ENCODE measurements at regions of chr6 and their contacts with region 1.

Region 1: GRCh38 chr6:166956444-166957086 is at the start of gene RNASET2:
- DNase-seq: peak; percentile 69 to 94
- H3K4me3 ChIP-seq: peak within 1 kb of the TSS; percentile 86
- H3K27ac ChIP-seq: no peak within 1 kb of the TSS
- H3K4me1 ChIP-seq: no peaks in the 10 kb centered on the region
- H3K27me3 ChIP-seq: no peaks in the 10 kb centered on the region
- CTCF ChIP-seq: no peak
- total RNA-seq, gene RNASET2: 16.3 and 20.1 TPM in 2 replicates

Region 2: GRCh38 chr6:166786704-166787293 is 169.8 kb before region 1 on chr6:
- CTCF ChIA-PET with region 1: no interaction called
- POLR2A ChIA-PET with region 1: no interaction called
- intact Hi-C with region 1: loop called (anchors 1 kb)
- DNase-seq: peak in 1 of 2 experiments; percentile 42
- H3K4me3 ChIP-seq: no peak overlapping the region
- H3K27ac ChIP-seq: no peak overlapping the region
- H3K4me1 ChIP-seq: no peaks in the 10 kb centered on the region
- H3K27me3 ChIP-seq: no peaks in the 10 kb centered on the region
- CTCF ChIP-seq: peak; percentile 84

Region 3: DNA sequence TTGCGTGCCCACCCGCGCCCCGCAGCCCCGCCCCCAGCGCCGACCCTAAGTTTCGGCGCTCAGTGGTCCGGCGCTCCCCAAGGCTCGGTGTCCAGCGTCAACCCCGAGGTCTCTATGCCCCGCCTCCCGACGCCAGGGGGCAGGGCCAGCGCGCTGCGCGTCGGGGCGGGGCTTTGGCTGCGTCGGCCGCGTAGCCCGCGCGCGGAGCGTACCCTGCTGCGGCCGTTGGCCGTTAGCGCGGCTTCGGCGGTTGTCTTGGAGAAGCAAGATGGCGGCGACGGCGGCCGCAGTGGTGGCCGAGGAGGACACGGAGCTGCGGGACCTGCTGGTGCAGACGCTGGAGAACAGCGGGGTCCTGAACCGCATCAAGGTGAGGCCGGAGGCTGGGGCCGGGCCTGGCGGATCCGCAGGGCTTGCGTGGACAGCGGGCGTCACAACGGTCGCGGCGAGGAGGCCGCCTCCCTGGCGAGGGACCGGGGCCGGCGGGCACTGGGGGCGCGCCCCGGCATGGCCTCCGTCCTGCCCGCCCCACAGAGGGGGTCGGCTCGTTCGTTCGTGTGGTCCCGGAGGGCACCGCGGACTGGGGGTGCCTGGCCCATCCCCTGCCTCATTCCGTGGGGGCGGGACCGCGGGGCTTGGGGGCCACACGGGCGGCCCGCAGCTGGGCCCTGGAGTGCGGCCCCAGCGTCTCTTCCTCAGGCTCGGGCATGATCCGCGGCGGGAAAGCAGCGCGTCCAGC is 42.7 kb after region 1 on chr6 and contains the start of gene CEP43:
- CTCF ChIA-PET with region 1: no interaction called
- POLR2A ChIA-PET with region 1: no interaction called
- intact Hi-C with region 1: loop called (anchors 2 kb)
- DNase-seq: peak; percentile 77 to 89
- H3K4me3 ChIP-seq: peak within 1 kb of the TSS; percentile 98
- H3K27ac ChIP-seq: no peak within 1 kb of the TSS
- H3K4me1 ChIP-seq: peaks cover 16% of the 10 kb centered on the region
- H3K27me3 ChIP-seq: no peaks in the 10 kb centered on the region
- CTCF ChIP-seq: no peak
- total RNA-seq, gene CEP43: 18.1 and 19.7 TPM in 2 replicates